ENCODE measurements at regions of chr20 and their contacts with region 1.

Region 1: DNA sequence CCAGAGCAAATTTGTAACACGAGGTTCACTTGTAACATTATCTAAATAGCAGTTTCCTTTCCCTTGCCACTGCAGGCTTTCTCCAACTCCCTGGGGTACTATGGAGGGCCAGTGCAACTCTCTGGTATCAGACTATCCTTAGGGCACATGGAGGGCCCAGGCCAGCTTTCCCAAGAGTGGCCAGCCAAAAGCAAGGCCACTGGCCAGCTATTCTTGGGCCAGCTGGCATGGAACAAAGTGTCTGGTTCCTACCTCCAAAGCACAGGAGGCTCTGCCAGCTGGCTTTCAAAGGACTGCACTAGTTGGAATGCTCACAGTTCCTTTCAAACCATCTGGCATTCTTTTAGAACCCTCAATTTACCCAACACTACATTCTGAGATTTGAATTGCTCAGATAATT is 8.7 kb downstream of the RNF24 start:
- DNase-seq: no peak
- ATAC-seq: no peak

Region 2: GRCh38 chr20:3888622-3889488 is 117.8 kb before region 1 on chr20 and contains the start of gene PANK2:
- intact Hi-C with region 1: loop called in 1 of 2 experiments (anchors 10 kb)
- DNase-seq: peak; percentile 98 to 99
- ATAC-seq: peak; percentile 95
- total RNA-seq, gene PANK2: 26.9 to 28.8 TPM

Region 3: GRCh38 chr20:3908667-3909066 is 98.0 kb before region 1 on chr20:
- intact Hi-C with region 1: no loop called
- DNase-seq: no peak
- ATAC-seq: no peak

Region 4: DNA sequence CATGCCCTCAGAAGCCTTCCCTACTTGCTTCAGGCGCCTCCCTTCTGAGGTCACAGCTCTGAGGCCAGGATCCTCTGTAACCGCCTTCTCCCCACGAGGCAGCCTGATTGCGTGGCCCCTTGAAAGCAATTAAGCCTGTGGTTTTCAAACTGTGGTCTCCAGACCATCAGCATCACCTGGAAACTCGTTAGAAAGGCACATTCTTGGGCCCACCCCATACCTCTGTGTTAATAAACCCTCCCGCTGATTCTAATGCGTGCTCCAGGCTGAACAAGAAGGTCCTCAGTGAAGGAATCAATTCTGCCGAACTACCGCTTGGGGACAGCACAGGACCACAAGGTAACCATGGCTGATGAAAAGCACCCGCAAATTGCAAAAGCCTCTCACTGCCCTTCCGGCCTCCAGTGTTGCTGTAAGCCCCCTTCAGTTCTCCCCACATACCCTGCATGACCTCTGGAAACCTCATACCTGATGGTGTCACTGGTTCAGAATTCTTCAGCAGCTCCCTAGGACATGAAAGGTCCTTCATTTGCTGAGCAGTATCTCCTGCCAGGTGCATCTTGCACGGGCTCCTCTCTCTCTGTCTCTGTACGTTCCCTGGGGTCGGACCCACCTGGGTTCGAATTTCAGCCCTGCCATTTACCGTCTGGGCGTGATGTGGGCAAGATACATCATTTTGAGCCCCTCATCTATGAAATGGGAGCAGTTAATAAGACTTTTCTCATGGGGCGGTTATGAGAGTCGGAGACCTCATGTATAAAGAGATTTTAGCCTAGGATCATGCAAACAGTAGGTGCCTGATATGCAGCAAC is 102.1 kb after region 1 on chr20:
- intact Hi-C with region 1: no loop called
- DNase-seq: peak; percentile 54 to 63
- ATAC-seq: peak; percentile 84